Endothelial cell of umbilical vein (primary cell): ENCODE measurements at regions of chr5 and their contacts with region 1.

Region 1: DNA sequence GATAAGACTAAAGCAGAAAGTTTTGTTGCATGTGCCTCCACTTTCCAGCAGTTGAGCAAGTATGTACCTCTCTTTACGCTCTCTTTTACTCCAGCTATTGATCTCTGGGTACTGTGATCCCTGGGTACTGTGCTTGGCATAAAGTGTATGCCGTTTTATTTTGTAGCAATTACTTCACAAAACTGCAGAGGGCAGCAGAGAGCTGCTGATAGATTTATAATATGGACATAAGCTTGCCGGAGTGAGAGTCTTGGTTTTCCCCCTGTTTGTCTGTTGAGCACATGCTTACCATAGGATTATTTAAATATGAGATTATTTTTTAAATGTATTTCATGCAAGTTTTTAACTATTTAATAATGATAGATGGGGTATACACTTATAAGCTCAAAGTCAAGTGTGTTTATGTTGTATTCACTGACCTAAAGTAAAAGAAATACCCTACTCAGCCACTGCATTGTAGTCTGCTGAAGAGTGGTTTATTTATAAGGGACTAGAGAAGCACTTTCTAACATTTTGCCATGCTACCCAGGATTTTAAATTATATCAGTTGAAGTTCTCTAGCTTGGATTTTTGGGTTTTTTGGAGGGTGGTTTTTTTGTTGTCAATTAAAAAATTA is 13.0 kb downstream of the TTC1 start:
- DNase-seq: peak; percentile 78
- H3K4me3 ChIP-seq: no peak overlapping the region
- H3K27ac ChIP-seq: peak overlapping the region; percentile 75
- H3K4me1 ChIP-seq: peaks cover 15% of the 10 kb centered on the region
- H3K27me3 ChIP-seq: no peaks in the 10 kb centered on the region
- CTCF ChIP-seq: peak; percentile 55 to 62
- POLR2A ChIP-seq: no peak

Region 2: DNA sequence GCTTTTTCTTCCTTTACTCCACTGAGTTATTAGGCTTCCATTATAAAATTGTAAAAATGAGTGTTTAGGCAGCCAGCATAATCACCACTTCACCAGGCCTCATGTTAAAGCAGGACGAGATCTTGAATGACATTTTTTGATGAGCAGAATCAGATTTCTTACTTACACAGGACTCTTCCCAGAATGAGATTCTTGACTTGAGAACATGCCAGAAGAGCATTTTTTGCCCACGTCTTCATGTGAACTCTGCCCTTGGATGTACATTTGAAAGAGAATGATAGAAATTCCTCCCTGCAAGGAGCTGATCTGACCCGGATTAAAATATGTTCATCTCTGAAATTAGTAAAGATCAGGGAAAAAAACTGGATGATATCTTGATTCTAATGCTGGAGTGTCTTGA is 317.8 kb before region 1 on chr5:
- CTCF ChIA-PET with region 1: no interaction called
- POLR2A ChIA-PET with region 1: no interaction called
- dilution Hi-C with region 1: no loop called
- intact Hi-C with region 1: no loop called
- DNase-seq: no peak
- H3K4me3 ChIP-seq: no peak overlapping the region
- H3K27ac ChIP-seq: no peak overlapping the region
- H3K4me1 ChIP-seq: no peaks in the 10 kb centered on the region
- H3K27me3 ChIP-seq: no peaks in the 10 kb centered on the region
- CTCF ChIP-seq: no peak
- POLR2A ChIP-seq: no peak

Region 3: GRCh38 chr5:159838551-159839222 is 183.3 kb before region 1 on chr5:
- CTCF ChIA-PET with region 1: no interaction called
- POLR2A ChIA-PET with region 1: no interaction called
- dilution Hi-C with region 1: no loop called
- intact Hi-C with region 1: no loop called
- DNase-seq: no peak
- H3K4me3 ChIP-seq: no peak overlapping the region
- H3K27ac ChIP-seq: no peak overlapping the region
- H3K4me1 ChIP-seq: no peaks in the 10 kb centered on the region
- H3K27me3 ChIP-seq: no peaks in the 10 kb centered on the region
- CTCF ChIP-seq: no peak
- POLR2A ChIP-seq: no peak

Region 4: GRCh38 chr5:159951387-159951786 is 70.6 kb before region 1 on chr5:
- CTCF ChIA-PET with region 1: no interaction called
- POLR2A ChIA-PET with region 1: no interaction called
- dilution Hi-C with region 1: no loop called
- intact Hi-C with region 1: no loop called
- DNase-seq: no peak
- H3K4me3 ChIP-seq: no peak overlapping the region
- H3K27ac ChIP-seq: no peak overlapping the region
- H3K4me1 ChIP-seq: no peaks in the 10 kb centered on the region
- H3K27me3 ChIP-seq: peaks cover 0 to 1% of the 10 kb centered on the region in 2 experiments
- CTCF ChIP-seq: no peak
- POLR2A ChIP-seq: no peak

Region 5: DNA sequence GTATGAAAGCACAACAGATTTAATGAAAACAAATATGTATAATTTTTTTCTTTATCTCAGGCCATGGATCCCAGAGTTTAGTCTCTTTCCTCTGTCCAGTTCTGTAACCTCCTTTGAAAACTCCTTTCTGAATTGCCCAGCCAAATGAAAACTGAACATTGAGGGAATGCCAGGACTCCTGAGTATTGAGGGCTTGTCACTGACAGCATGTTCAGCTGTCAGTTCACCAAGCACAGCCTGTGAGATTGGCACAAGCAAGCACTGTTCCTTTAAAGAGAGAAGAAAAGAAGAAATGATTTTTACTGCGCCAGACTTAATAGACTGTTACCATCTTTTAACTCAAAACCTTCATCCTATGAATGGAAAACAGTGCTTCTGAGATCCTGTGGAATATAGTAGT is 14.3 kb after region 1 on chr5:
- CTCF ChIA-PET with region 1: interaction called, 13 read pairs
- POLR2A ChIA-PET with region 1: no interaction called
- dilution Hi-C with region 1: no loop called
- intact Hi-C with region 1: no loop called
- DNase-seq: no peak
- H3K4me3 ChIP-seq: no peak overlapping the region
- H3K27ac ChIP-seq: no peak overlapping the region
- H3K4me1 ChIP-seq: peaks cover 6% of the 10 kb centered on the region
- H3K27me3 ChIP-seq: no peaks in the 10 kb centered on the region
- CTCF ChIP-seq: no peak
- POLR2A ChIP-seq: no peak

Region 6: DNA sequence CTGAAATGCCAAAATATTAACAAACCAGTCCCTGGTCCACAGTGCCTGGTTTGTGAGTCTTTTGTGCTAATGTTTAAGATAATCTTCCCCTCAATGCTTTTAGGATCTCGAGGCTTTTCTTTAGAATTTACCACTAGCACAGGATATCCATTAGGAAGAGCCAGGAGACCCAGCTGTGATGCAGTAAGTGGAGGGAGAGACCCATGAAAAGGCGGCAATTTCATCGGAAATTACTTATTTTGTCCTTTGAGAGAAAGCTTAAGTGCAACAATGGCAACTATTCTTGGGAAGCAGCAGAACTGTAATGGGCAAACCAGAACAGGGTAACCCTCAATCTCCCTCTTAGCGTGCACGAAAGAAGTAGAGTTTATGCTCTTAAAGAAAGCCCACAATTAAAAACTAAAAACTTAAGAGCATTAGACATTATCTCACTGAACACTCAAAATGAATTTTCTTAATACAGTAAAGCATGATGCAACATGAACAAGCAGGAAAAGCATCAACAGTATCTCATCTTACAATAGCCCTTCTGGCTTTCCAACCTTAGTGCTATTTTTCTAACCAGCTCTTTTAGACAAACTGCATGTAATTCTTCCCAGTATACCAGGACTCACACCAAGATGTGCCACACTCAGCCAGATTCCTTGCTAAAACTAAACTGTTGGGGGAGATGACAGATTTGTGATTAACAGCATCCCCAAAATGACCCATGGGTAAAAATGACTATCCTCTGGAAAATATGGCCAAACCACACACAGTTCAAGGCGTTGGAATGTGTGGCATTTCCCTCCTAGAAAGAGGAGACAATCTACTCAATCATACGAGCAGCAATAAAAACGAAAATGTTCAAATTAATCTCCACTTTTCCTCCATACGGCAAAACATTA is 60.9 kb after region 1 on chr5:
- CTCF ChIA-PET with region 1: interaction called, 48 read pairs
- POLR2A ChIA-PET with region 1: no interaction called
- dilution Hi-C with region 1: no loop called
- intact Hi-C with region 1: loop called (anchors 2 kb)
- DNase-seq: peak; percentile 79
- H3K4me3 ChIP-seq: peak overlapping the region in 1 of 3 experiments; percentile 41
- H3K27ac ChIP-seq: peak overlapping the region; percentile 63
- H3K4me1 ChIP-seq: peaks cover 23% of the 10 kb centered on the region
- H3K27me3 ChIP-seq: no peaks in the 10 kb centered on the region
- CTCF ChIP-seq: no peak
- POLR2A ChIP-seq: no peak

Region 7: GRCh38 chr5:160188142-160189015 is 166.4 kb after region 1 on chr5:
- CTCF ChIA-PET with region 1: interaction called, 10 read pairs
- POLR2A ChIA-PET with region 1: no interaction called
- dilution Hi-C with region 1: no loop called
- intact Hi-C with region 1: no loop called
- DNase-seq: peak; percentile 32
- H3K4me3 ChIP-seq: peak overlapping the region; percentile 5 to 47 (median 33)
- H3K27ac ChIP-seq: peak overlapping the region; percentile 44
- H3K4me1 ChIP-seq: peaks cover 8% of the 10 kb centered on the region
- H3K27me3 ChIP-seq: no peaks in the 10 kb centered on the region
- CTCF ChIP-seq: peak in 1 of 2 donors; percentile 3
- POLR2A ChIP-seq: no peak

Region 8: DNA sequence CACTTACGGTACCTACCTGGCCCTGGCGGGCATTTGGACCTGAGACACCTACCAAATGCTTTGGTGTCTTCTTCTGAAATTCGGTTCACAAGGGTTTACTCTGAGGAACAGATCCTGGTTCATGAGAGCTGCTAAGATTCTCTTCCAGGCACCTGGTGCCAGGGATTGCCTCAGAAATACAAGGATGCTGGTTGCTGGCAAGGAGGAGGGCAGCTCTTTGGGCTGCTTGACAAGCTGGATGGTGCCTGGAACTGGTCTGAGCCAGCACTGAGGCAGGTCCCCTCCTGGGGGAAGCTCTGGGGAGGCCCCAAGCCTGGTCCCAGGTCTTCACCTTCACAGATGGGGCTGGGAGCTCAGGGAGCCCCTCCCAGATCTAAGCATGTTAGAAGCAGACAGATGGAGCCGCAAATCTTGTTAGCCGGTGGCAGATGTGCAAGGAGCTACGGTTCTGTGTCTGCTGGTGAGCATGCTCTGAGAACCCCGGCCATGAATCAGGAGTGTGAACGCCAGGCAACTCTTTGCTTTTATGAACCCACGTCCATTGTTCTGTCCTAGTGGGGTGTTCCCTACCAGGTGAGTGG is 223.7 kb after region 1 on chr5:
- CTCF ChIA-PET with region 1: interaction called, 33 read pairs
- POLR2A ChIA-PET with region 1: no interaction called
- dilution Hi-C with region 1: no loop called
- intact Hi-C with region 1: loop called (anchors 1 kb)
- DNase-seq: no peak
- H3K4me3 ChIP-seq: no peak overlapping the region
- H3K27ac ChIP-seq: no peak overlapping the region
- H3K4me1 ChIP-seq: no peaks in the 10 kb centered on the region
- H3K27me3 ChIP-seq: no peaks in the 10 kb centered on the region
- CTCF ChIP-seq: no peak
- POLR2A ChIP-seq: no peak

Region 9: GRCh38 chr5:160369990-160370712 is 348.2 kb after region 1 on chr5 and contains the start of gene C1QTNF2:
- CTCF ChIA-PET with region 1: interaction called, 17 read pairs
- POLR2A ChIA-PET with region 1: no interaction called
- dilution Hi-C with region 1: no loop called
- intact Hi-C with region 1: no loop called
- DNase-seq: peak; percentile 44
- H3K4me3 ChIP-seq: peak within 1 kb of the TSS; percentile 42 to 63 (median 46)
- H3K27ac ChIP-seq: no peak within 1 kb of the TSS
- H3K4me1 ChIP-seq: peaks cover 7% of the 10 kb centered on the region
- H3K27me3 ChIP-seq: peaks cover 50 to 56% of the 10 kb centered on the region in 2 experiments
- CTCF ChIP-seq: no peak
- POLR2A ChIP-seq: no peak
- total RNA-seq, gene C1QTNF2: 0.53 TPM in 1 of 2 replicates, not detected in the other

Region 10: GRCh38 chr5:160439205-160439600 is 417.3 kb after region 1 on chr5:
- CTCF ChIA-PET with region 1: interaction called, 10 read pairs
- POLR2A ChIA-PET with region 1: no interaction called
- dilution Hi-C with region 1: no loop called
- intact Hi-C with region 1: no loop called
- DNase-seq: peak; percentile 91
- H3K4me3 ChIP-seq: peak overlapping the region in 2 of 3 experiments; percentile 30 to 34
- H3K27ac ChIP-seq: no peak overlapping the region
- H3K4me1 ChIP-seq: peaks cover 10% of the 10 kb centered on the region
- H3K27me3 ChIP-seq: peaks cover 0 to 6% of the 10 kb centered on the region in 2 experiments
- CTCF ChIP-seq: peak; percentile 86 to 90
- POLR2A ChIP-seq: no peak